Tibial artery (tissue), 4 donors: ENCODE measurements at regions of chr7 and their contacts with region 1.

Region 1: GRCh38 chr7:103369430-103369829 is 22.0 kb downstream of the PSMC2 start:
- DNase-seq: no peak
- H3K4me3 ChIP-seq: no peak overlapping the region
- H3K27ac ChIP-seq: no peak overlapping the region
- H3K4me1 ChIP-seq: no peaks in the 10 kb centered on the region
- H3K27me3 ChIP-seq: no peaks in the 10 kb centered on the region
- CTCF ChIP-seq: no peak

Region 2: DNA sequence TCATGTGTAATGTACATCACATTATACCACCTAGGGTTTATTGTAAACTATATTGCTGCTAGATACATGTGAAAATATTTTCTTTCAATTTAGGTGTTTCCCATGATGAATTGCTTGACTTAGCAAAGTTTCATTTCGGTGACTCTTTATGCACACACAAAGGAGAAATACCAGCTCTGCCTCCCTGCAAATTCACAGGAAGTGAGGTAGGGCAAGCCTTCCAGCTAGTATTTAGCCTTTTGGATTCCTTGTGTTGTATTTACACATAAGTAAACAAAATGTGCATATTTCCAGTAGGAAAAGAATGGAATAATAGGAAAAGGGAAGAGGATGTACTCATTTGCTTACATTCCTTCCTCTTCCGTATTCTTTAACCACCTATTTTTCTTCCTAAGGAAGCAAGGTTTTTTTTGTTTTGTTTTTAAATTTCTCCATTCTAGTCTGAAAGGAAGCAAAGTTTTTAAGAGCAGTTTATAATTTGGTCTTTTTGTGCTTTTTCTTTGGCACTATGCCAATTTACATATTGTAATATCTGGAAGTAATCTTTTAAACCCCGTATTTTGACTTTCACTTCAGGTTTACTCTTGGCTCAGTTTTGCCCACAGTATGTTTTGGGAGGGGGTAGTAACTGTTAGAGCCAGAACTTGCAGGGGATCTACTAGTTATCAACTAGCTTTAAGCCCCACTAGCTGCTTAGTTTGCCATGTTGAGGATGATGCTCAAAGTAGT is 61.8 kb before region 1 on chr7:
- intact Hi-C with region 1: loop called (anchors 10 kb)
- DNase-seq: no peak
- H3K4me3 ChIP-seq: no peak overlapping the region
- H3K27ac ChIP-seq: no peak overlapping the region
- H3K4me1 ChIP-seq: no peaks in the 10 kb centered on the region
- H3K27me3 ChIP-seq: no peaks in the 10 kb centered on the region
- CTCF ChIP-seq: no peak

Region 3: DNA sequence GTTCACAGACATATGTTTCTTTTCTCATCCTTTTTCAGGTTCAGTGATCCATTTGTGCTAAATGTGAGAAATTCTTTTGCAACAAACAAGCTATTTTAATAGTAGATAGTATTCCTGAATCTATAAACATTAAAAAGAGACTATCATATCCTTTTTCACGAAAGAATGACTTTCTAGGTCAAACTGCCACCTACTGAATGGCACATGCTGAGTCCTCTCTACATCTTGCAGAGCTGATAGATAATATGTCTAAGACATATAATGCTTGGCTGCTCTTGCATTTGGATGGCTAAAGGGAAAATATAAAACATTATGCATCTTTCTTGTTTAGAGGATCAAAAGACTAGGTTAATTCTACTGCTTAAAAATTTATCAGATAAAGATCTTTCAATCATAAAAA is 190.7 kb after region 1 on chr7:
- intact Hi-C with region 1: no loop called
- DNase-seq: no peak
- H3K4me3 ChIP-seq: no peak overlapping the region
- H3K27ac ChIP-seq: no peak overlapping the region
- H3K4me1 ChIP-seq: peaks cover 0 to 16% (median 0%) of the 10 kb centered on the region in 4 donors
- H3K27me3 ChIP-seq: no peaks in the 10 kb centered on the region
- CTCF ChIP-seq: no peak